B cell (primary cell): ENCODE measurements at regions of chr19 and their contacts with region 1.

Region 1: DNA sequence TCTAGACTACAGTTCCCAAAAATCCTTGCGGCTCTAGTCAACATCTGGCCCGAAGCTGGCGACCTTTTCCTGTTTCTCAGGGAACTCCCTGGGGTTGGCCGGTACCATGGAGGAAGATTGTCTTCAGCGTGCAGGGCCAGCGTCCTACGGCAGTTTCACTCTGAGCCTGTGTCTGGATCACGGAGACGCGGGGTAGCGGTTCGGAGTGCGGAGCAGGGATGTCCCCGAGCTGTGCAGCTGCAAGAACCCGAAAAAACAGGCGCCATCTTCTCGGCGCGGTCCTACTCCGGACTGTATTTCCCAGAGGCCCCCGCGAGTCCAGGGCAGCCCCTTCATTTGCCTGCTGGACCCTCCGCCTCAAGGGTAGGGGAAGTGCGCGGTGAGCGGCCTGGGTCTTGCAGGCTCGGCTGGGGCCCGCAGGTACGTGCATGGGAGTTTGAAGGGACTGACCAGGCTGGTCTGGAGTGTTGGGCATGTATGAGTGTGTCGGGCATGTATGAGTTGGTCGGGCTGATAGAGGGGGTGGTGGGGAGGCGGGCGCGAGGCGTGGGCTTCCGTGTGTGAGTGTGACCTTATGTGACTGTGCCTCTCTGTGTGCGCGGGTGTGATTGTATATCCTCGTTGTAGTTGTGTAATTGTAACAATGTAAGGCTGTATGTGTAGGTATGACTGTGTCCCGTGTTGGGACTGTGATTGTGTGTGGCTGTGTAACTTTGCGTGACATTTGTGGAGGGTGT is at the start of gene ZNF383:
- DNase-seq: peak; percentile 92
- ATAC-seq: peak; percentile 90
- H3K4me3 ChIP-seq: peak within 1 kb of the TSS; percentile 78 to 96 (median 88)
- H3K4me3 Mint-ChIP-seq: peak within 1 kb of the TSS; percentile 97
- H3K27ac ChIP-seq: peak within 1 kb of the TSS; percentile 77 to 86
- H3K27ac Mint-ChIP-seq: peak within 1 kb of the TSS; percentile 100
- H3K4me1 ChIP-seq: peaks cover 10 to 12% of the 10 kb centered on the region in 2 donors
- H3K4me1 Mint-ChIP-seq: peaks cover 24% of the 10 kb centered on the region
- H3K27me3 ChIP-seq: no peaks in the 10 kb centered on the region
- H3K27me3 Mint-ChIP-seq: no peaks in the 10 kb centered on the region
- CTCF ChIP-seq: no peak
- total RNA-seq, gene ZNF383: 37.2 and 42.2 TPM in 2 replicates

Region 2: GRCh38 chr19:36214386-36215275 is 1003.4 kb before region 1 on chr19 and contains the starts of genes ZNF146 and ZNF565:
- CTCF ChIA-PET with region 1: no interaction called
- POLR2A ChIA-PET with region 1: interaction called, 5 read pairs
- intact Hi-C with region 1: loop called (anchors 2 kb)
- DNase-seq: peak; percentile 98
- ATAC-seq: peak; percentile 89
- H3K4me3 ChIP-seq: peak within 1 kb of the TSS; percentile 70 to 99 (median 85)
- H3K4me3 Mint-ChIP-seq: no peak within 1 kb of the TSS
- H3K27ac ChIP-seq: peak within 1 kb of the TSS; percentile 87 to 97
- H3K27ac Mint-ChIP-seq: peak within 1 kb of the TSS; percentile 41
- H3K4me1 ChIP-seq: peaks cover 13 to 21% of the 10 kb centered on the region in 2 donors
- H3K4me1 Mint-ChIP-seq: peaks cover 19% of the 10 kb centered on the region
- H3K27me3 ChIP-seq: no peaks in the 10 kb centered on the region
- H3K27me3 Mint-ChIP-seq: no peaks in the 10 kb centered on the region
- CTCF ChIP-seq: no peak
- total RNA-seq, gene ZNF146: 62.2 and 69.3 TPM in 2 replicates
- total RNA-seq, gene ZNF565: 5.2 and 5.5 TPM in 2 replicates

Region 3: GRCh38 chr19:36489118-36489919 is 728.7 kb before region 1 on chr19 and contains the start of gene ZNF566:
- CTCF ChIA-PET with region 1: no interaction called
- POLR2A ChIA-PET with region 1: no interaction called
- intact Hi-C with region 1: loop called (anchors 5 kb)
- DNase-seq: peak; percentile 96
- ATAC-seq: peak; percentile 90
- H3K4me3 ChIP-seq: peak within 1 kb of the TSS; percentile 79 to 98 (median 90)
- H3K4me3 Mint-ChIP-seq: peak within 1 kb of the TSS; percentile 99
- H3K27ac ChIP-seq: peak within 1 kb of the TSS; percentile 85 to 86
- H3K27ac Mint-ChIP-seq: peak within 1 kb of the TSS; percentile 99
- H3K4me1 ChIP-seq: peaks cover 16 to 30% of the 10 kb centered on the region in 2 donors
- H3K4me1 Mint-ChIP-seq: peaks cover 41% of the 10 kb centered on the region
- H3K27me3 ChIP-seq: no peaks in the 10 kb centered on the region
- H3K27me3 Mint-ChIP-seq: no peaks in the 10 kb centered on the region
- CTCF ChIP-seq: no peak
- total RNA-seq, gene ZNF566: 26.0 and 26.6 TPM in 2 replicates

Region 4: GRCh38 chr19:36850559-36851442 is 367.2 kb before region 1 on chr19 and contains the start of gene ZNF345:
- CTCF ChIA-PET with region 1: no interaction called
- POLR2A ChIA-PET with region 1: no interaction called
- intact Hi-C with region 1: loop called (anchors 1 kb)
- DNase-seq: peak; percentile 93
- ATAC-seq: peak; percentile 82
- H3K4me3 ChIP-seq: peak within 1 kb of the TSS; percentile 92 to 100 (median 93)
- H3K4me3 Mint-ChIP-seq: no peak within 1 kb of the TSS
- H3K27ac ChIP-seq: peak within 1 kb of the TSS; percentile 74 to 84
- H3K27ac Mint-ChIP-seq: no peak within 1 kb of the TSS
- H3K4me1 ChIP-seq: peaks cover 16 to 20% of the 10 kb centered on the region in 2 donors
- H3K4me1 Mint-ChIP-seq: peaks cover 5% of the 10 kb centered on the region
- H3K27me3 ChIP-seq: no peaks in the 10 kb centered on the region
- H3K27me3 Mint-ChIP-seq: no peaks in the 10 kb centered on the region
- CTCF ChIP-seq: no peak
- total RNA-seq, gene ZNF345: 17.7 and 19.5 TPM in 2 replicates

Region 5: DNA sequence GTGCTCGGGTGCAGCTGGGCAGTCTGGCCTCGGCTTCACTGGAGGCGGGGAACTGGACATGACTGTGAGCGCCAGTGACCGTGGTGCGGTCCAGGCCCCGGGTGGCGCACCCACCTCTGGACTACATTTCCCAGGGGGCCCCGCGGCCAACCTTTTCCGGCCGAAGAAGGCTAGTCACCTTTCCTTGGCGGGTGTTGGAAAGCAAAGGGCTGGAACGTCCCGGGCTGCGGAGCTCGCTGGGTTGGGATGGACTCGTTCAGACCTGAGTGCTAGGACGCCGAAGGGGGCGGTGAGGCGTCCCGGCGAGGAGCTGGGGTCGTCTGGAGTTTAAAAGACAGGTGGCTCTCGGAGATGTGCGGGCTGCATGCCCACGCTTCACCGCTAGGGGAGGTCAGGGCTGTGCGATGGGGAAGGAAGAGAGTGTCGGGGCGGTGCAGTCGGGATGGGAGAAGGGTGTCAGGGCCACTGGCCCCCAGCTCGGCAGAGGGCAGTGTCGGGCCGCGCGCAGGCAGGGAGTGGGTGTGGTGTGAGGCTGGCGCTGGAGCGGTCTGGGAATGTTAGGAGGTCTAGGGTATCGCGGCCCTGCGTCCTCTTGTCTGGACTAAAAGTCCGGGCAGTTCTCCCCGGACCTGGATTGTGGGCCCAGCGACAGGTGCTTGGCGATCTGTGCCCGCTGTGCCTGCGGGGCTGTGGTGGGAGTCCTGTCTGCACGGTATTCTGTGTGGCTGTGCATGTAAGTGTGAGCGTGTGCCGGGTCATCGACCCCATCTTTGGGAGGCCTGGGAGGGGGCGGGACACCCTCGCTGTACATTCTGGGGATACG is 244.8 kb before region 1 on chr19:
- CTCF ChIA-PET with region 1: no interaction called
- POLR2A ChIA-PET with region 1: no interaction called
- intact Hi-C with region 1: loop called (anchors 1 kb)
- DNase-seq: peak; percentile 92
- ATAC-seq: peak; percentile 97
- H3K4me3 ChIP-seq: peak overlapping the region; percentile 52 to 92 (median 79)
- H3K4me3 Mint-ChIP-seq: peak overlapping the region; percentile 97
- H3K27ac ChIP-seq: peak overlapping the region; percentile 49 to 71
- H3K27ac Mint-ChIP-seq: peak overlapping the region; percentile 91
- H3K4me1 ChIP-seq: peaks cover 11 to 16% of the 10 kb centered on the region in 2 donors
- H3K4me1 Mint-ChIP-seq: peaks cover 13% of the 10 kb centered on the region
- H3K27me3 ChIP-seq: no peaks in the 10 kb centered on the region
- H3K27me3 Mint-ChIP-seq: no peaks in the 10 kb centered on the region
- CTCF ChIP-seq: peak; percentile 78

Region 6: DNA sequence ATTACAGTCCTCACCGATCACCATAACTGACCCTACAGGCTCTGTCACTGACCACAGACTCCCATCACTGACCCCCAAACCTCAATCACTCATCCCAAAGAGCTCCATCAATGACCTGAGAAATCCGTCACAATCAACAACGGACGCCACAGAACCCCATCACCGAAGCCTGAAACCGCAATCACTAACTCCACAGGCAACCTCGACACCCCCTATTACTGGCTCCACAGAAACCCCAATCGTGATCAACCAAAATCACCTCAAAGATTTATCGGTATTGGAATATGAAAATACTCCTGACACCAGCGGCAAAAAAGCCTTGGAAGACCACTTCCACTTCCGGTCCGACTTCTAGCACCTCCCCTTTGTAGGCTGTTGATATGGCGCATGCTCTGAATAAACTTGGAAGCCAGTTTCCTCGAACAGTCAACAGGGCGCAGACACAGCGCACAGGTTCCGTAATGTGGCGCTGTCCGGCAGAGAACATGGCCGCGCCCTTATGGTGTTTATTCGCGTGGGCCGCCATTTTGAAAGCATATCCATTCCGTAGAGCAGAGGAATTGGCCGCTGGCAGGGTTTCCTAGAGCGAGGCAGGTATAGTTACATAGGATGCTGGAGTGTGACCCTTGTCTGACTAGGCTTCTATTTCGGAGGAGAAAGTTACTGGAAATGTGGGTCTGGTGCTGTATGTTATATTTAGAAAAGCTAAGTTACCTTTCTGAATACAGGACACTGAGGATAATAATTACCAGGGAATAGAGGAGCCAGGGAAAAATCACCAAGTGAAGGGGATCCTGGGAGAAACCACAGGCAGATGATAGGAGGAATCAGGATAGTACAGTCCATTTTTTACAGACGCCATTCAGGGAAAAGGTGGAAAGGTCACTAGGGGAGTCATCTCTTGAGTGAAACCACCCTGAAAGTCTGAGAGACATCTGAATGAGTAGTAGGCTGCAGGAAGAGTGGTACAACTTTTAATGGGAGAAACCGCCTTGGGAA is 45.4 kb before region 1 on chr19 and contains the start of gene ZNF585A:
- CTCF ChIA-PET with region 1: interaction called, 4 read pairs
- POLR2A ChIA-PET with region 1: interaction called, 4 read pairs
- intact Hi-C with region 1: loop called (anchors 1 kb)
- DNase-seq: peak; percentile 96
- ATAC-seq: peak; percentile 100
- H3K4me3 ChIP-seq: peak within 1 kb of the TSS; percentile 72 to 96 (median 82)
- H3K4me3 Mint-ChIP-seq: no peak within 1 kb of the TSS
- H3K27ac ChIP-seq: peak within 1 kb of the TSS; percentile 70 to 89
- H3K27ac Mint-ChIP-seq: no peak within 1 kb of the TSS
- H3K4me1 ChIP-seq: peaks cover 5 to 7% of the 10 kb centered on the region in 2 donors
- H3K4me1 Mint-ChIP-seq: peaks cover 3% of the 10 kb centered on the region
- H3K27me3 ChIP-seq: no peaks in the 10 kb centered on the region
- H3K27me3 Mint-ChIP-seq: no peaks in the 10 kb centered on the region
- CTCF ChIP-seq: peak; percentile 23
- total RNA-seq, gene ZNF585A: 20.0 and 22.0 TPM in 2 replicates

Region 7: DNA sequence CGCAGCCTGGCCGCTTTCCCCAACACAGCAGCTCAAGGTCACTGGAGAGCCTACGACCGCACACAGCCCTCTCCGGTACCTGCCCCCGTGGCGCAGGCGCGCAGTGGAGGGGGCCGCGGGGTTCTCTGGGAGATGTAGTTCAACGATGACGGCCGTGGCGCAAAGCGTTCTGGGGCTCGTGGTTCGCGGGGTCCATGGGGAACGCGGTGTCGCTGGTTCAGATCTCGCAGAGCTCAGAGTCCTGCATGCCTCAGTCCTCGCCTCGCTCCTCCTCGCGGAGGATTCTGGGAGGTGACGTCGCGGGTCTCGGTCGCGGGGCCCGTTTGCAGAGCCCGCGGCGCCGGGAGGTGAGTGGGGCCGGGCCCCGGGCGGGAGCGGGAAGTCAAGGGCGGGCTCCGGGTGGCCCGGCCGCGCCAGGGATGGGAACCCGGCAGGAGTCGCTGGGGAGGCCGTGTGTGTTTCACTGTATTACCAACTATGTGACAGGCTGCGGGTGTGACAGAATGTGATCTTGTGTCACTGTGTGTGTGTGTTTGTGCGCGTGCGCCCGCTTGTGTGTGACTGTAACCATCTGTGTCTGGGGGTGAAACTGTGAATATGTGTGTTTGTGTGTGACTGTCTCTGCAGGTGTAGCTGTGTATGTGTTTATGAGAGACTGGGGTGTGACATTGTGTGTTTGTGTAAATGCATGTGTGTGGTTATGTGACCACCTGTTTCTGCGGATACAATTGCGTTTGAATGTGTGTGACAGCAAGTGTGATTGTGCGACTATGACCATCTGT is 153.0 kb after region 1 on chr19 and contains the start of gene ZNF527:
- CTCF ChIA-PET with region 1: no interaction called
- POLR2A ChIA-PET with region 1: no interaction called
- intact Hi-C with region 1: loop called (anchors 1 kb)
- DNase-seq: peak; percentile 98
- ATAC-seq: peak; percentile 96
- H3K4me3 ChIP-seq: peak within 1 kb of the TSS; percentile 59 to 87 (median 79)
- H3K4me3 Mint-ChIP-seq: peak within 1 kb of the TSS; percentile 99
- H3K27ac ChIP-seq: peak within 1 kb of the TSS; percentile 73 to 87
- H3K27ac Mint-ChIP-seq: peak within 1 kb of the TSS; percentile 98
- H3K4me1 ChIP-seq: peaks cover 5 to 14% of the 10 kb centered on the region in 2 donors
- H3K4me1 Mint-ChIP-seq: peaks cover 12% of the 10 kb centered on the region
- H3K27me3 ChIP-seq: no peaks in the 10 kb centered on the region
- H3K27me3 Mint-ChIP-seq: no peaks in the 10 kb centered on the region
- CTCF ChIP-seq: peak; percentile 12
- total RNA-seq, gene ZNF527: 9.0 and 11.4 TPM in 2 replicates

Region 8: GRCh38 chr19:37389234-37389633 is 171.2 kb after region 1 on chr19:
- CTCF ChIA-PET with region 1: no interaction called
- POLR2A ChIA-PET with region 1: no interaction called
- intact Hi-C with region 1: no loop called
- DNase-seq: no peak
- ATAC-seq: no peak
- H3K4me3 ChIP-seq: peak overlapping the region in 1 of 5 experiments; percentile 23
- H3K4me3 Mint-ChIP-seq: no peak overlapping the region
- H3K27ac ChIP-seq: no peak overlapping the region
- H3K27ac Mint-ChIP-seq: no peak overlapping the region
- H3K4me1 ChIP-seq: no peaks in the 10 kb centered on the region
- H3K4me1 Mint-ChIP-seq: no peaks in the 10 kb centered on the region
- H3K27me3 ChIP-seq: no peaks in the 10 kb centered on the region
- H3K27me3 Mint-ChIP-seq: no peaks in the 10 kb centered on the region
- CTCF ChIP-seq: no peak